GM12878 (cell line): ENCODE measurements at regions of chr6 and their contacts with region 1.

Region 1: DNA sequence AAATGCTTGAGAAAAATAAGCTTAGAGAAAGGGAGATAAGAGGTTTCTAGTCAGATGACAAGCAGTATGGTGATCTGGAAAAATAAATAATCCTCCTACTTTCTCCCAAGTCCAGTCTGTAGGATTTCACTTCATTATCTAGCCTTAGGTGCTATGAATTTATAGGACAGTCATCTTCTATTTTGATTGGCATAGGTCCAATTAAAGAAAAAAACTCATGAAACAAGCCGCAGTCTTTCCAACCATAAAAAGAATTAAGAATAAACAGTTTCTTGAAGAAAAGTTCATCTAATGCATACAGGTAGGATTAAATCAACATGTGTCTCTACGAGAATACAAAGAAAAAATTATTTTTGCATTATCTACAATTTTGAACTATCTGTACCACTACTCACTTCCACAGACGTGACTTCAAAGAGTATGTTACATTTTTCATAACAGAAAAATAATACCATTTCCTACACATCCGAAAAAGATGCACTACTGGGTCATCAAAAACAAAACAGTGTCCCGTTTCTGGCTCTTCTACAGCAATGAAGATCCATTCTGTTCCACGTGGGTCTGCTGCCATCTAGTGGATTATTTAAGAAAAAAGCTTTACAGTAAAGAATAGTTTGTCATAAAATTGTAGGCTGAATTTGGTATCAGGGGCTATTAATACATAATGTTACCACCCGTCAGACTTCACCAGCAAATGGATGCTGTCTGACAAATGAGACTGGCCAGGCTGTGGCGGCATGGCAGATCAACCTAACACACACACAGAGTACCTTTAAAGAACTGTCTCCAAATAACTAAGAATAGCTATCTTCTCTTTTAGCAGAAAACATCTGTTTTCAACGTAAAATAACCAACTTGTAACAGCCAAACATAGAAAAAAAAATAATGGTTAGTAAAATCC is 28.9 kb downstream of the STX7 start:
- DNase-seq: peak; percentile 37
- ATAC-seq: peak; percentile 93
- H3K4me3 ChIP-seq: no peak overlapping the region
- H3K27ac ChIP-seq: no peak overlapping the region
- H3K4me1 ChIP-seq: peaks cover 31% of the 10 kb centered on the region
- H3K27me3 ChIP-seq: no peaks in the 10 kb centered on the region
- CTCF ChIP-seq: peak; percentile 47 to 74 (median 60); a peak in 5 of 6 replicates
- EP300 ChIP-seq: no peak
- POLR2A ChIP-seq: no peak
- RAD21 ChIP-seq: peak; percentile 92

Region 2: GRCh38 chr6:131914967-131915751 is 568.9 kb before region 1 on chr6:
- CTCF ChIA-PET with region 1: no interaction called
- POLR2A ChIA-PET with region 1: no interaction called
- RAD21 ChIA-PET with region 1: no interaction called
- SMC1A ChIA-PET with region 1: no interaction called
- in situ Hi-C with region 1: loop called (anchors 5 kb)
- intact Hi-C with region 1: loop called (anchors 10 kb)
- DNase-seq: peak; percentile 24
- ATAC-seq: peak; percentile 84
- H3K4me3 ChIP-seq: no peak overlapping the region
- H3K27ac ChIP-seq: no peak overlapping the region
- H3K4me1 ChIP-seq: no peaks in the 10 kb centered on the region
- H3K27me3 ChIP-seq: peaks cover 0 to 3% of the 10 kb centered on the region in 2 experiments; a peak in 1 of 4 replicates
- CTCF ChIP-seq: peak; percentile 64 to 78 (median 71)
- EP300 ChIP-seq: no peak
- POLR2A ChIP-seq: no peak
- RAD21 ChIP-seq: peak; percentile 75

Region 3: DNA sequence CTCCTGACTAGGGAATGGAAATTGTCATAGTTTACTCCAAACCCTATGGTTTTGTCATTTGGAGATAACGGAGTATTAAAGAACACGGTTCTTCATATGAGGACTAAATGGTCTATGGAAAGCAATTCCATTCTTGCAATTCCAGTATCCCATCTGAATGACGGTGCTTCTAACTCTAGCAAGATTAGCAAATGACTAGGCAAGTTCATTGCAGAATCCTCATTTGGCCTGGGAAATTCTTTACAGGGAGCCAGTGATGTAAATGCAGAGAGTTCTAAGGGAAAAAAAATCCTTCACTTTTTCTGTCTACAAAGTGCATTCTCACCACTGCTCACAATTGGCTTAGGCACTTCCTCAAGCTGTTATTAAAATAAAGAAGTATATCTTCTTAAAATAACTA is 194.3 kb before region 1 on chr6:
- CTCF ChIA-PET with region 1: interaction called, 12 read pairs
- POLR2A ChIA-PET with region 1: no interaction called
- RAD21 ChIA-PET with region 1: interaction called, 5 read pairs
- SMC1A ChIA-PET with region 1: interaction called, 5 read pairs
- in situ Hi-C with region 1: no loop called
- intact Hi-C with region 1: no loop called
- DNase-seq: no peak
- ATAC-seq: no peak
- H3K4me3 ChIP-seq: no peak overlapping the region
- H3K27ac ChIP-seq: no peak overlapping the region
- H3K4me1 ChIP-seq: peaks cover 3% of the 10 kb centered on the region
- H3K27me3 ChIP-seq: no peaks in the 10 kb centered on the region
- CTCF ChIP-seq: no peak
- EP300 ChIP-seq: no peak
- POLR2A ChIP-seq: no peak
- RAD21 ChIP-seq: no peak

Region 4: DNA sequence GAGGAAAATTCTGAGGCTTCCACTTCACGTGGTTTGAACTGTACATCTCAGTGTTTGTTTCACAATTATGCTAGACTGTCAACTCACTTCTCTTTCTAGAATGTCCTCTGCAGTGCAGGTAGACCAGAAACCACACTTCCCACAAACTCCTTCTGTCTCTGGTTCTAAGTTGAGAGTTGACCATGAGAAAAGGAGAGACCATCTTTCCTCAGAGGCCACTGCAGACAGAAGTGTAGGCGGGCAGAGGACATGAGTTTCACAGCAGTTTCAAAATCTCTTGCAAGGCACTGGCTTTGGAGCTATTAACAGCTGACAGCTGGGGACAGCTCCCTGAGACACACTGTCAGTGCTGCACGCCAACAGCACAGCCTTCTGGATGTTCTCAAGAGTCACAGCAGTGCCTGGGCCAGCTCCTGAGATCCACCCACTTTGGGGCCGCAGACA is 27.3 kb before region 1 on chr6:
- CTCF ChIA-PET with region 1: interaction called, 25 read pairs
- POLR2A ChIA-PET with region 1: no interaction called
- RAD21 ChIA-PET with region 1: interaction called, 6 read pairs
- SMC1A ChIA-PET with region 1: interaction called, 9 read pairs
- in situ Hi-C with region 1: no loop called
- intact Hi-C with region 1: no loop called
- DNase-seq: peak; percentile 90
- ATAC-seq: peak; percentile 89
- H3K4me3 ChIP-seq: no peak overlapping the region
- H3K27ac ChIP-seq: no peak overlapping the region; the same call in 1 of the 2 replicates
- H3K4me1 ChIP-seq: peaks cover 33% of the 10 kb centered on the region
- H3K27me3 ChIP-seq: no peaks in the 10 kb centered on the region
- CTCF ChIP-seq: peak; percentile 45 to 62 (median 57); a peak in 5 of 6 replicates
- EP300 ChIP-seq: peak in 1 of 2 experiments; percentile 66; a peak in 2 of 4 replicates
- POLR2A ChIP-seq: no peak
- RAD21 ChIP-seq: peak; percentile 84

Region 5: DNA sequence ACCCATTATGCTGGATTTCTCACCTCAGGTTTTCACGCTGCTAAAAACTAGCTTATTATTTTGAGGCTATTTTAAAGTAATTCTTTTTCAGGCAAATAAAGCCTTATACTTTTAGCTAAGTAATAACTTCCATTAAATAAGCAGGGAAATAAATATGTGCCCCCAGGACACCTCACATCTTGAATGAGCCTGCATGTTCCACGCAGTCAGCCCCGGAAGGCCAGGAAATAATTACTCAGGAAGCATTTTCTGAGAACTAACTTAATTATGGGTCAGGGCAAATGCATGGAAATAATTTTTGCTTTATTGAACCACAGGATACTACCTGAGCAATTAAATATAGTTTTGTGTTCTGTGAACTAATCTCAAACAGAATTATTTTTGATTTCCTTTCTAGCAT is 12.2 kb before region 1 on chr6:
- CTCF ChIA-PET with region 1: interaction called, 60 read pairs
- POLR2A ChIA-PET with region 1: no interaction called
- RAD21 ChIA-PET with region 1: interaction called, 8 read pairs
- SMC1A ChIA-PET with region 1: interaction called, 12 read pairs
- in situ Hi-C with region 1: no loop called
- intact Hi-C with region 1: no loop called
- DNase-seq: no peak
- ATAC-seq: no peak
- H3K4me3 ChIP-seq: no peak overlapping the region
- H3K27ac ChIP-seq: no peak overlapping the region
- H3K4me1 ChIP-seq: peaks cover 4% of the 10 kb centered on the region; the same call in 1 of the 2 replicates
- H3K27me3 ChIP-seq: no peaks in the 10 kb centered on the region
- CTCF ChIP-seq: no peak
- EP300 ChIP-seq: no peak
- POLR2A ChIP-seq: no peak
- RAD21 ChIP-seq: no peak

Region 6: DNA sequence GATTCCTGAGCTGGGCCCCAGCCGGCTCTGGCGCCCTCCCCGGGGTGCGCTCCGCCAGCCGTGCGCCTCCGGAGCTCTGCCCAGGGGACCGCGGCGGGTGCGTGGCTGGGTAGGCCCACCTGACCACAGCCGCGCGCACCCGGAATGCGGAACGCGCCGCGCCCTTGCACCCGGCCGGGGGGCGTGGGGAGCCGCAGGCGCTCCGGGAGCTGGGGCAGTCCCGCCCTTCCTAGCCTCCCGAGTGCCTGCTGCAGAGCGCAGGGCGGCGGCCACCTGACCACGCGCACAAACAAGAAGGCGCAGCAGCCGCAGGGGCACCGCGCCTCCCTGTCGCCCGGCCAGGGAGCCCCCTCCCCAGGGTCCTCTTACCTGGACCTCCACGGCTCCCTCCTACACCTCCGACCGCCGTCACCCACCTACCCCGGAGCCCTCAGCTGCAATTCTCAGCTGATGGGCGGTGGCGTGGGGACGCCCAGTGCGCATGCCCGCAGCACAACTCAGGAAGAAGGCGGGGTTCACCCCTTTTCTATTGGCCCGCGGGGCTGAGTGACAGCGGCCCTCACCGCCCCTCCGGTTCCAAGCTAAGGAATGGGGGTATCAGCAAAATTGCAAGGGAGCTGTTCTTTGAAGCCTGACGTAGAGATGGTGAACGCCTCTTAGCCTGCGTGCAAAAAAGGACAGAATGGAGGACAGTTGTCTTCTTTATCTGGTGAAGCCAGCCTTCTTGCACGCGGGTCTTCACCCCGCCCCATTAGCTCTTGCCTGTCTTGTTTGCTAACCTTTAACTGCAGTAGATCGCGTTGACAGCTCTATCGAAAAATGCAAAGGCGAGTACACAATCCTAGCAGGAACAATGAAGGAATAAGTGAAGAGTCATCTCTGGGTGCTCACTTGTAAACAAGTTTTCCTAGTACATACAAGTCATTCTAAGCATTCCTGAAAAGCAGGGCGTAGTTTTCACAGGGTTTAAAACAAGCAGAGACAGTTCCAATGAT is 28.9 kb after region 1 on chr6 and contains the start of gene STX7:
- CTCF ChIA-PET with region 1: interaction called, 5 read pairs
- POLR2A ChIA-PET with region 1: interaction called, 3 read pairs
- RAD21 ChIA-PET with region 1: interaction called, 10 read pairs
- SMC1A ChIA-PET with region 1: interaction called, 8 read pairs
- in situ Hi-C with region 1: no loop called
- intact Hi-C with region 1: no loop called
- DNase-seq: peak; percentile 48
- ATAC-seq: peak; percentile 91
- H3K4me3 ChIP-seq: peak within 1 kb of the TSS; percentile 61
- H3K27ac ChIP-seq: peak within 1 kb of the TSS; percentile 63
- H3K4me1 ChIP-seq: peaks cover 6% of the 10 kb centered on the region
- H3K27me3 ChIP-seq: no peaks in the 10 kb centered on the region
- CTCF ChIP-seq: no peak
- EP300 ChIP-seq: no peak
- POLR2A ChIP-seq: peak; percentile 77
- RAD21 ChIP-seq: no peak
- polyA plus RNA-seq, gene STX7: 26.5 to 30.7 TPM